T-cell (primary cell): ENCODE measurements at regions of chr4 and their contacts with region 1.

Region 1: GRCh38 chr4:39134683-39135319 is 47.5 kb upstream of the WDR19 start:
- DNase-seq: no peak
- ATAC-seq: peak in 1 of 4 experiments; percentile 23
- H3K4me3 ChIP-seq: no peak overlapping the region
- H3K4me3 Mint-ChIP-seq: no peak overlapping the region
- H3K27ac ChIP-seq: no peak overlapping the region
- H3K27ac Mint-ChIP-seq: no peak overlapping the region
- H3K4me1 ChIP-seq: peaks cover 0 to 3% of the 10 kb centered on the region in 2 experiments
- H3K4me1 Mint-ChIP-seq: peaks cover 6 to 13% (median 10%) of the 10 kb centered on the region in 3 donors
- H3K27me3 ChIP-seq: no peaks in the 10 kb centered on the region
- H3K27me3 Mint-ChIP-seq: no peaks in the 10 kb centered on the region

Region 2: GRCh38 chr4:38948551-38948950 is 186.2 kb before region 1 on chr4:
- CTCF ChIA-PET with region 1: interaction called, 3 to 14 read pairs
- POLR2A ChIA-PET with region 1: no interaction called
- DNase-seq: no peak
- ATAC-seq: no peak
- H3K4me3 ChIP-seq: no peak overlapping the region
- H3K4me3 Mint-ChIP-seq: no peak overlapping the region
- H3K27ac ChIP-seq: peak overlapping the region; percentile 48
- H3K27ac Mint-ChIP-seq: peak overlapping the region in 1 of 2 donors; percentile 91
- H3K4me1 ChIP-seq: peaks cover 7 to 13% of the 10 kb centered on the region in 2 experiments
- H3K4me1 Mint-ChIP-seq: peaks cover 21 to 31% (median 28%) of the 10 kb centered on the region in 3 donors
- H3K27me3 ChIP-seq: no peaks in the 10 kb centered on the region
- H3K27me3 Mint-ChIP-seq: no peaks in the 10 kb centered on the region